Right lobe of liver (tissue), 6 donors: ENCODE measurements at regions of chr14 and their contacts with region 1.

Region 1: DNA sequence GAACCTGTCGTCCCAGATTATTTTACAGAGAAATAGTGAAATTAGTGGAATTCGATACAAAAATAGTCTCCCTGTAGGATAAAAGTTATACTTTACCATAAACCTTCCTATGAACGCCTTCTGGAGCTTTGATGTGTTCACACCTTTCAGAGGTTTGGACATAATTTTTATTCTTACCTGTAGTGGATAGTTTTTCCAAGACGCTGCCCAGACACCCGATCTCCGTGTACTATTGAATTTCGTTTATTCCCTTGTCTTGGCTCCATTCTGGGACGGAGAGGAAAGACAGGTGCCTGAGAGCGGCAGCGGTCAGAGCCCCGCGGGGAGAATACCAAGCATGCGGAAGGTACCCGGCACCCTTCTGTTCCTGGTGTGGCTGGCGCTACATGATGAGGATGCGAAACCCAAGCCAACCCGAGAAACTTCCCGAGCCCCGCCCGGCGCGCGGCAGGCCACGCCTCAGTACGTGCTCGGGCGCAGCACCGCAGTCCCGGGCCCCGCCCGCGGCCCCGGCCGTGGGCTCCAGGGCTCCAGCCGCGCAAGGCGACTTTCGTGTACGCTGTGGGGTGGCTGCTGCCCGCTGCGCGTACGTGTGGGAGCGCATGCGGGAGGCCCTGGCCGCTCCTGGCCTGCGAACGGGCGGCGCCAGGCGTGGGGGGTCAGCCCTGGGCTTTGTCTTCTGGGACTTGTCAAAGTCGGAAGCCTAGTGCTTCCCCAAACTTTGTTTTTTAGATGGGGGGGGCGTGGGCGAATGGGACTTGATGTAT is 11.3 kb upstream of the SNAPC1 start:
- DNase-seq: peak; percentile 78 to 88 (median 84)
- ATAC-seq: peak; percentile 82 to 96 (median 94)
- H3K4me3 ChIP-seq: peak overlapping the region; percentile 14 to 46 (median 30)
- H3K27ac ChIP-seq: peak overlapping the region; percentile 39 to 58 (median 49)
- H3K4me1 ChIP-seq: peaks cover 0 to 2% (median 0%) of the 10 kb centered on the region in 4 donors
- H3K27me3 ChIP-seq: no peaks in the 10 kb centered on the region
- CTCF ChIP-seq: no peak
- POLR2A ChIP-seq: peak; percentile 71

Region 2: GRCh38 chr14:61461808-61462275 is 289.0 kb before region 1 on chr14:
- intact Hi-C with region 1: loop called in 1 of 2 experiments (anchors 10 kb)
- DNase-seq: peak in 1 of 3 donors; percentile 33
- ATAC-seq: peak; percentile 78 to 93 (median 84)
- H3K4me3 ChIP-seq: no peak overlapping the region
- H3K27ac ChIP-seq: no peak overlapping the region
- H3K4me1 ChIP-seq: peaks cover 0 to 4% (median 0%) of the 10 kb centered on the region in 4 donors
- H3K27me3 ChIP-seq: no peaks in the 10 kb centered on the region
- CTCF ChIP-seq: peak; percentile 72 to 90 (median 81)
- POLR2A ChIP-seq: no peak

Region 3: GRCh38 chr14:62162998-62163589 is 412.2 kb after region 1 on chr14:
- intact Hi-C with region 1: no loop called
- DNase-seq: no peak
- ATAC-seq: peak; percentile 82 to 87 (median 84)
- H3K4me3 ChIP-seq: no peak overlapping the region
- H3K27ac ChIP-seq: no peak overlapping the region
- H3K4me1 ChIP-seq: no peaks in the 10 kb centered on the region
- H3K27me3 ChIP-seq: no peaks in the 10 kb centered on the region
- CTCF ChIP-seq: peak; percentile 67 to 79 (median 74)
- POLR2A ChIP-seq: no peak